ENCODE measurements at regions of chr11 and their contacts with region 1.

Region 1: GRCh38 chr11:77047007-77047927 is 13.1 kb downstream of the B3GNT6 start:
- DNase-seq: peak in 8 of 9 donors; percentile 51 to 94 (median 92)
- ATAC-seq: peak; percentile 89
- H3K4me3 ChIP-seq: peak overlapping the region; percentile 70
- H3K4me3 Mint-ChIP-seq: peak overlapping the region; percentile 55 to 82 (median 70)
- H3K27ac ChIP-seq: peak overlapping the region; percentile 60
- H3K27ac Mint-ChIP-seq: peak overlapping the region; percentile 8 to 75 (median 58)
- H3K4me1 ChIP-seq: peaks cover 4 to 14% of the 10 kb centered on the region in 2 donors
- H3K4me1 Mint-ChIP-seq: peaks cover 6 to 17% (median 12%) of the 10 kb centered on the region in 7 donors
- H3K27me3 ChIP-seq: no peaks in the 10 kb centered on the region
- H3K27me3 Mint-ChIP-seq: peaks cover 6 to 25% (median 9%) of the 10 kb centered on the region in 5 donors

Region 2: DNA sequence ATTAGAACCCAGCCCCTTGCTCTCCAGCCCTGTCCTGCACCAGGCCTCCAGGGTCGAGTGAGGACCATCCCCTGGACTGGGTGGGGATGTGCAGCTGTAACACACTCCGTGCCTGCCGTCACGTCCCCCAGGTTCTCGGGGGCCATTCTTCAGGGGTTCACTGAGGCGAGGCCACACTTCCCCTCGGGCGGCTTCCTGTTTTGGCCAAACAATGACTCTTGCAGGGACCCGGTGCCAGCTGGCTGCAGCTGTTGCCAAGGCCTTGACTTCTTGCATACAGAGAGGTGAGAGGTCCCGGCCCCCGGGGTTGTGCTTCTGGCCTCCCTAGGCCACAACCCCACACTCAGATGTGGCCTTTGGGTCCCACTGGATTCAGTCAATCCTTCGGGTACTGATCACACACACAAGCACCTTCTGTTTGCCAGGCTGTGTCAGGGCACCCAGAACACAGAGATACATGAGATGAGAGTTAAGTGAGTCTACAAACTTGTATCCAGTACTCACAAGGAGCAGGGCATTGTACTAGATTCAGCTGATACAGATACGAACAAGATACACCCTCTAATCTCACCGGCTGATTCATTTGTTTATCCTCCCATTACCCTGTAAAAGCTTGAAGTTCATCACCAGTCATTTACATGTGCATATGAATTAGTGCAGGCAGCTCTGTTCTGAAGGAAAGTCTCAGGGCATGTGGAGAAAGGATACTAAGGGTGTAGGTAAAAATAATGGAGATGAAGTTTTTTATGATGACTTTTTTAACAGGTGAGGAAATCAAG is 409.6 kb before region 1 on chr11:
- CTCF ChIA-PET with region 1: no interaction called
- POLR2A ChIA-PET with region 1: no interaction called
- intact Hi-C with region 1: no loop called
- DNase-seq: no peak
- ATAC-seq: peak; percentile 73
- H3K4me3 ChIP-seq: no peak overlapping the region
- H3K4me3 Mint-ChIP-seq: no peak overlapping the region
- H3K27ac ChIP-seq: no peak overlapping the region
- H3K27ac Mint-ChIP-seq: no peak overlapping the region
- H3K4me1 ChIP-seq: no peaks in the 10 kb centered on the region
- H3K4me1 Mint-ChIP-seq: peaks cover 0 to 8% (median 0%) of the 10 kb centered on the region in 7 donors
- H3K27me3 ChIP-seq: no peaks in the 10 kb centered on the region
- H3K27me3 Mint-ChIP-seq: peaks cover 27 to 52% (median 44%) of the 10 kb centered on the region in 5 donors

Region 3: GRCh38 chr11:76734456-76735420 is 312.5 kb before region 1 on chr11:
- CTCF ChIA-PET with region 1: no interaction called
- POLR2A ChIA-PET with region 1: no interaction called
- intact Hi-C with region 1: loop called (anchors 1 to 5 kb)
- DNase-seq: no peak
- ATAC-seq: no peak
- H3K4me3 ChIP-seq: no peak overlapping the region
- H3K4me3 Mint-ChIP-seq: no peak overlapping the region
- H3K27ac ChIP-seq: no peak overlapping the region
- H3K27ac Mint-ChIP-seq: no peak overlapping the region
- H3K4me1 ChIP-seq: no peaks in the 10 kb centered on the region
- H3K4me1 Mint-ChIP-seq: peaks cover 0 to 3% (median 0%) of the 10 kb centered on the region in 7 donors
- H3K27me3 ChIP-seq: no peaks in the 10 kb centered on the region
- H3K27me3 Mint-ChIP-seq: peaks cover 0 to 8% (median 0%) of the 10 kb centered on the region in 5 donors

Region 4: DNA sequence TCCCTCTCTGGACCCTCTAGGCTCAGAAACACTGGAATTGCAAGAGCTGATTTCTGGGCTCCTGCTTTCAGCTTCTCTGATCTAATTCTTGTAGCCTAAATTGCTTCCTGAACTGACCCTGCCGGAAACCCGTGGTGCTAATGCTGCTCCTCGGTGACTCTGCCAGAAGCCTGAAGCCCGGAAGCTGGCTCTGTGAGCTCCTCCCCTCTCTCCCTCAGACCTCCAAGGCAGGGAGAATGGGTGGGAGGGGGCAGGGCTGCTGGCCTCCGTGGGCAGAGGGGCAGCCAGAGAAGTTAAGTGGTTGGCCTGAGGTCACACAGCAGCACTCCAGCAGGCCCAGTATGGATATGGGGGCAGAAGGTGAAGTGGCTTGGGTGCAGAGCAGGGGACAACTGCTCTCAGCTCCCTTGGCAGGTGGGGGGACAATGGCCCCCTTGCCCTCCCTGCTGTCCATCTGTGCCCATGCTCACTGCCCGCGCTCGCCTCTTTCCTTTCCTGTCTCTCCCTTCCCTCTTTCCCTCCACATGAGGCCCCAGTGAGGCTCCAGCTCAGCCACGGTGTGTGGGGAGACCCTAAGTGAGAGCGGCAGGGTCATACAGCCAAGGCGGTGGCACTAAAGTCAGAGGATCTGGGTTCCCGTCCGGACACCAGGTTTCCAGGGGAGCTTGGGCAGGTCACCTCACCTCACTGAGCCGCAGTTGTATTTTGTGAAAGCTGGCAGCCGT is 35.7 kb after region 1 on chr11:
- CTCF ChIA-PET with region 1: interaction called, 6 read pairs
- POLR2A ChIA-PET with region 1: interaction called, 8 read pairs
- intact Hi-C with region 1: loop called in 1 of 2 experiments (anchors 2 kb)
- DNase-seq: peak in 8 of 9 donors; percentile 42 to 66 (median 60)
- ATAC-seq: peak; percentile 83
- H3K4me3 ChIP-seq: peak overlapping the region; percentile 44
- H3K4me3 Mint-ChIP-seq: peak overlapping the region; percentile 77 to 93 (median 82)
- H3K27ac ChIP-seq: peak overlapping the region; percentile 78
- H3K27ac Mint-ChIP-seq: peak overlapping the region; percentile 94 to 98 (median 98)
- H3K4me1 ChIP-seq: peaks cover 7 to 17% of the 10 kb centered on the region in 2 donors
- H3K4me1 Mint-ChIP-seq: peaks cover 6 to 37% (median 21%) of the 10 kb centered on the region in 7 donors
- H3K27me3 ChIP-seq: no peaks in the 10 kb centered on the region
- H3K27me3 Mint-ChIP-seq: peaks cover 0 to 5% (median 0%) of the 10 kb centered on the region in 5 donors

Region 5: DNA sequence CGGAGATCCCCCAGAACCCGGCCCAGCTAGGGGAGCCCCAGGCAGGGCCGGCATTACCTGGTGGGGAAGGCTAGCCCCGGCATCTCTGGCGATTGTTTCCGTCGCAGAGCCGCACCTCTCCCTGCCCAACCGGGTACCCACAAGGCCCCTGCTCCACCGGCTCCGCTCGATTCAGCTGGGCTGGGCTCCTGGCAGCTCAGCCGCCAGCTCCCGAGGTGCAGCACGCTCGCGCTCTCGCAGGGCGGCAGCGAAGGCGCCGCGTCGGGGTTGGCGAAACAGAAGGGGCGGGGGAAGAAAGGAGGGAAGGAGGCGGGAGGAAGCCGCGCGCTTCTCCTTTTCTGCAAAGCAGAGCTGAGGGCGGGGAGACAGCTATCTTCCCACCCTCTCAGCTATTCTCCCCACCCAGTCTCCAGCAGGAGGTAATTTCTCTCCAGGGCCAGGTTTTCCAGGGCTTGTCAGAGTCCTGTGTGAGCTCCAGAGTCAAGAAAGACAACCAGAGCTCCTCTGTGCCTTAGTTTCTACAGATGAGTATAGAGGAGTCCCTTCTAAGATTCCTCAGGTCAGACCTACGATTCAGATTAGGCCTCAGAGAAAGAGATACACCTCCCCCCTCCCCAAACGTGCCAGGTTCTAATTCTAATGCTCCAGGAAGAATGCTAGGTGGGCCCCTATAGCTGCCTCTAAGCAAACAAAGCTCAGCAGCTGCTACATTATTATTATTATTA is 364.6 kb after region 1 on chr11:
- CTCF ChIA-PET with region 1: no interaction called
- POLR2A ChIA-PET with region 1: no interaction called
- intact Hi-C with region 1: loop called in 1 of 2 experiments (anchors 10 kb)
- DNase-seq: peak; percentile 64 to 82 (median 78)
- ATAC-seq: peak; percentile 96
- H3K4me3 ChIP-seq: peak overlapping the region; percentile 88
- H3K4me3 Mint-ChIP-seq: peak overlapping the region; percentile 88 to 98 (median 94)
- H3K27ac ChIP-seq: peak overlapping the region; percentile 66
- H3K27ac Mint-ChIP-seq: peak overlapping the region; percentile 65 to 94 (median 82)
- H3K4me1 ChIP-seq: peaks cover 14 to 19% of the 10 kb centered on the region in 2 donors
- H3K4me1 Mint-ChIP-seq: peaks cover 33 to 54% (median 39%) of the 10 kb centered on the region in 7 donors
- H3K27me3 ChIP-seq: no peaks in the 10 kb centered on the region
- H3K27me3 Mint-ChIP-seq: no peaks in the 10 kb centered on the region

Region 6: GRCh38 chr11:77637345-77638165 is 590.3 kb after region 1 on chr11 and contains the start of gene CLNS1A:
- CTCF ChIA-PET with region 1: no interaction called
- POLR2A ChIA-PET with region 1: no interaction called
- intact Hi-C with region 1: loop called in 1 of 2 experiments (anchors 5 kb)
- DNase-seq: peak; percentile 53 to 79 (median 75)
- ATAC-seq: peak; percentile 99
- H3K4me3 ChIP-seq: peak within 1 kb of the TSS; percentile 77
- H3K4me3 Mint-ChIP-seq: peak within 1 kb of the TSS; percentile 91 to 97 (median 96)
- H3K27ac ChIP-seq: peak within 1 kb of the TSS; percentile 87
- H3K27ac Mint-ChIP-seq: peak within 1 kb of the TSS; percentile 86 to 98 (median 95)
- H3K4me1 ChIP-seq: peaks cover 7 to 19% of the 10 kb centered on the region in 2 donors
- H3K4me1 Mint-ChIP-seq: peaks cover 34 to 49% (median 44%) of the 10 kb centered on the region in 7 donors
- H3K27me3 ChIP-seq: no peaks in the 10 kb centered on the region
- H3K27me3 Mint-ChIP-seq: no peaks in the 10 kb centered on the region
- total RNA-seq, gene CLNS1A: 82.2 to 149 (median 113) TPM

Region 7: GRCh38 chr11:78338138-78338537 is 1290.9 kb after region 1 on chr11:
- CTCF ChIA-PET with region 1: no interaction called
- POLR2A ChIA-PET with region 1: no interaction called
- intact Hi-C with region 1: no loop called
- DNase-seq: no peak
- ATAC-seq: no peak
- H3K4me3 ChIP-seq: no peak overlapping the region
- H3K4me3 Mint-ChIP-seq: peak overlapping the region in 1 of 10 donors; percentile 23
- H3K27ac ChIP-seq: no peak overlapping the region
- H3K27ac Mint-ChIP-seq: peak overlapping the region in 1 of 9 donors; percentile 95
- H3K4me1 ChIP-seq: no peaks in the 10 kb centered on the region
- H3K4me1 Mint-ChIP-seq: peaks cover 0 to 83% (median 8%) of the 10 kb centered on the region in 7 donors
- H3K27me3 ChIP-seq: no peaks in the 10 kb centered on the region
- H3K27me3 Mint-ChIP-seq: peaks cover 0 to 9% (median 7%) of the 10 kb centered on the region in 5 donors

Region 8: DNA sequence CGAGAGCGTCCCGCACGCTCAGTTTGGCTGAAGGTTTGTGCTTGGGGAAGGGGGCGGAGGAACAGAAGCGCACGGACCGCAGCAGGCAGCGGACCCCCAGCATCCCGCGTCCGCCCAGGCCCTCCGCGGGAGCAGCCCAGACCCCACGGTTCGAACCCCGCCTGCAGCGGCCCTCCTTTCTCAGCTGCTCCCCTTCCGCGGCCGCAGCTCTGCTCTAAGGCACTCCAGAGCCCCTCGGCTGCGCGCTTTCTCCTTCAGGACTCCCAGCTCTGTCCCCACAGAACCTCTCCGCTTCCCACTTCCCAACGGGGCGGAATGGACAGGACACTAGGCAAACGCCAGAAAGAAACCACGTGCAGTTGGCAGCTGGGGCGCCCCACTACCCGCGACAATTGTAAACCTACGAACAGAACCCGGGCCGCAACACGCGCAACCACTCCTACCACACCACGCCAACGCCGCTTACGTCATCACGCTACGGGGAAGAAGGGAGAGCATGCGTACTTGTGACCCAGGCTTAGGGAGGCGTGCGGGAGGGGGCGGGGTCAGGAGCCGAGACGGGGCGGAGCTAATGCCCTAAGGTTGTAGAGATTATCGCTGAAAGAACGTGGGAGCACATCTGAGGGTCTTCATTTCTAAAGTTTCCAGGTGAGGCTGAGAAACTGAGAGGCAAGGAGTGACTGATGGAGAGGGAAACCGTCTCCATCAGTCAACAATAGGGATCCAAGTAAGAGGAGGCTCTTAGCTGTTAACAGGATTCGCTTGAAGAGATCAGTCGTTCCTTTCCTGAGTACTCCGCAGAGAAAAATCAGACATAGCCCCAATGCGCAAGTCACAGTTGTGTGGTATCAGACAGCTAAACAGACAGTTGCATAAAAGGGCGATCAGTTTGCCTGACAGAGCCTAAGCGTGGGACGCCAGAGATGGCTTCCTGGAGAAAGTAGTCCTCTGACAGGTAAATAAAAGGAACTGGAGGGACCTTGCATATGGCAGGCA is 1527.4 kb after region 1 on chr11 and contains the start of gene NARS2:
- CTCF ChIA-PET with region 1: no interaction called
- POLR2A ChIA-PET with region 1: no interaction called
- intact Hi-C with region 1: loop called in 1 of 2 experiments (anchors 5 kb)
- DNase-seq: peak; percentile 89 to 97 (median 96)
- ATAC-seq: peak; percentile 99
- H3K4me3 ChIP-seq: peak within 1 kb of the TSS; percentile 70
- H3K4me3 Mint-ChIP-seq: peak within 1 kb of the TSS; percentile 93 to 100 (median 98)
- H3K27ac ChIP-seq: peak within 1 kb of the TSS; percentile 96
- H3K27ac Mint-ChIP-seq: peak within 1 kb of the TSS; percentile 86 to 99 (median 98)
- H3K4me1 ChIP-seq: peaks cover 7 to 21% of the 10 kb centered on the region in 2 donors
- H3K4me1 Mint-ChIP-seq: peaks cover 24 to 63% (median 50%) of the 10 kb centered on the region in 7 donors
- H3K27me3 ChIP-seq: no peaks in the 10 kb centered on the region
- H3K27me3 Mint-ChIP-seq: peaks cover 0 to 5% (median 0%) of the 10 kb centered on the region in 5 donors
- total RNA-seq, gene NARS2: 9.3 to 21.5 (median 19.7) TPM